SK-N-SH (cell line): ENCODE measurements at regions of chr2 and their contacts with region 1.

Region 1: DNA sequence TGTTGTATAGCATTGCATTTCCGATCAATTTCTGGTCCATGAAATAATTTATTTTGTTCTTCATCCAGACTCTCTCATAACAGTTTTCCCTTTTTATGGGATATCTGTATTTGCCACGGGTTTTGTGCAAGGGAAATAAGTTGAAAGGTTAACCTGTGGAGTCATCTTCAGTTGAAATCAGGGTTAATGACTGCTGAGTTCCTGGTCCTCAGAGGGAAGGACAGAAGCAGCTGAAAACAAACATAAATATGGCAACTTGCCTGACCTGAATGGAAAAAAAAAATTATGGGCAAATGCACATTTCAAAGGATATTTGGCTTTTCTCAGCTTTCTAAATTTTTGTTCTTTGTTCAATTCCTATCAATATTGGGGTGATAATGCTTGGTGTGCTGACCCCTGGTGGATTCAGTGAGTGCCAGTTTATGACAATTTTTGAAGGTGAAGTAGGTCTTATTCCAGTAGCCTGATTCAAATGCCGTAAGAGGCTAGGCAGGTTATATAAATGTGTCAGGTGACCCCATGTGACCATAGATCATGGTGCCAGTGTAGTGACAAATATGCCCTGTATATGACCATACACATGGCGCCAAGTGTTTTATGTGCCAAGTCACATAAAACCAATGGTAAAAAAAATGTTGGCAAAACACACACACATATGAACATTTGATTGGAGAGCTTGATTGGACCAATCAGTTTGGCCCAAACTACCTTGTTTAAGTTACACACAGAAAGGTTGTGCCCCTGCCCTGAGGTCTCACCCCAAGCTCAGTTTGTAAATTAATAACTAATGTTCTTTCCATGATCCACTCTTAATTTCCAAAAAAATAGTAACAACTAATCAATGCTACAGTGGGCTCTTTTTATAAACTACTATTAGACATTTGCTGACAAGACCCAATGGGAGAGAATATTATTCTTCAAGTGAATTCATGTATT is 47.6 kb upstream of the FAM124B start:
- DNase-seq: peak; percentile 44
- H3K4me3 ChIP-seq: no peak overlapping the region
- H3K27ac ChIP-seq: no peak overlapping the region
- H3K4me1 ChIP-seq: no peaks in the 10 kb centered on the region
- H3K27me3 ChIP-seq: no peaks in the 10 kb centered on the region
- CTCF ChIP-seq: peak; percentile 68
- EP300 ChIP-seq: no peak
- RAD21 ChIP-seq: peak; percentile 62

Region 2: DNA sequence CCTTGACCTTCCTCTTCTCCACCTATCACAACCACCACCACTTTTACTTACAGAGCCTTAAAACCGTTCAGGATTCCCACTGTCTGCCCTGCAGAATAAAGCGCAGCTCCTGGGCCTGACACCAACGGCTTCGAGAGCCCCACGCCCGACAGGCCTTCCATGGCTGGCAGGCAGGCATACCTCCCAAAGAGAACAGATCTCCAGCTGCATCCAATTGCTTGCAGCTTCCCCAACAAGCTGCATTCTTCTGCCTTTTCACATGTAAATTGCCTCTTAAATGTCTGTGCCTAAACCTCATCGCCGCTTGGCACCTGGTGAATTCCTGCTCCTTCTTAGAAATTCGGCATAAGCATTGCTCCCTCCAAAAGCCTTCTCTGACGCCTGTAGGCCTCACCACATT is 16.0 kb before region 1 on chr2:
- CTCF ChIA-PET with region 1: interaction called, 11 read pairs
- POLR2A ChIA-PET with region 1: no interaction called
- DNase-seq: no peak
- H3K4me3 ChIP-seq: no peak overlapping the region
- H3K27ac ChIP-seq: no peak overlapping the region
- H3K4me1 ChIP-seq: no peaks in the 10 kb centered on the region
- H3K27me3 ChIP-seq: no peaks in the 10 kb centered on the region; the same call in 1 of the 2 replicates
- CTCF ChIP-seq: no peak
- EP300 ChIP-seq: no peak
- RAD21 ChIP-seq: no peak